ENCODE measurements at regions of chr6 and their contacts with region 1.

Region 1: DNA sequence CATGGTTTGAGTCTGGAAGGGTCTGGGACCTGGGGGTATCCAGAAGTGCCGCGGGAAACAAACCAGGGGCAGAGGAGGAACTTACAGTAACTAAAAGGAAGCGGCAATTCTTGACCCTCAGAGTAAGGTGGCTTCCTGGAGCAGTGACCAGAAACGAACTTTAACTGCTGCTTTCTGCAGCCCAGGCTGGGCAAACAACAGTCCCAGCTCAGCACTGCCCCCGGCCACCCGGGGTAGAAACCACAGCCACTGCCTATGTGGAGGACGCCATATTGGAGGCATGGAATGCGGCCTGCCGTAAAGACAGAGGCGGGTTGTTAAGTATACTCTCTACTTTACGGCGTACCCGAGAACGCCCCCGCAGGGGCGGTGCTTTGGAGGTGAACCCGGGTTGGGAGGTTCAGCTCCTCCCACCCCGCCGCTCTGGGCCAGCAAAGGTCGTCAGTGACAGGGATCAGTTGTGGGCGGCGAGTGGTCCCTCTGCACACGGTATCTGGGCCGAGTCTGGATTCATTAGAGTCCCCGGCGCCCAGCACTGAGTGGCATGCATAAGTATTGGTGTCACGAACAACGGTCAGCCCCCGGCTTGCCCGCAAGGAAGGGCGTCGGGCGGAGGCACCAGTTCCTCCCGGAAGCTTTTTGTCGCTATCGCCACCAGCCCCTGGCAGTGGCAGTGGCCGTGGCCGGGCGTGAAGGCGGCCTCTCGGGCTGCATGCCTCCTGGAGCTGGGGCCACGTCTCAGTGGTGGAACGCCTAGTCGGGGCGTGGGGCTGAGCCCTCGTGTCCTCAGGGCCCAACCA is at the start of gene PDSS2:
- DNase-seq: peak; percentile 100
- ATAC-seq: peak; percentile 96
- H3K4me3 Mint-ChIP-seq: peak within 1 kb of the TSS; percentile 82
- H3K27ac Mint-ChIP-seq: peak within 1 kb of the TSS; percentile 93
- H3K4me1 Mint-ChIP-seq: peaks cover 19% of the 10 kb centered on the region
- H3K27me3 Mint-ChIP-seq: no peaks in the 10 kb centered on the region
- total RNA-seq, gene PDSS2: 11.4 to 11.7 TPM

Region 2: GRCh38 chr6:106325336-106326178 is 1133.9 kb before region 1 on chr6 and contains the start of gene ATG5:
- CTCF ChIA-PET with region 1: no interaction called
- POLR2A ChIA-PET with region 1: no interaction called
- intact Hi-C with region 1: loop called in 1 of 2 experiments (anchors 2 kb)
- DNase-seq: peak; percentile 100
- ATAC-seq: peak; percentile 96
- H3K4me3 Mint-ChIP-seq: peak within 1 kb of the TSS; percentile 99
- H3K27ac Mint-ChIP-seq: peak within 1 kb of the TSS; percentile 98
- H3K4me1 Mint-ChIP-seq: peaks cover 39% of the 10 kb centered on the region
- H3K27me3 Mint-ChIP-seq: peaks cover 8% of the 10 kb centered on the region
- total RNA-seq, gene ATG5: 27.2 to 31.6 TPM

Region 3: GRCh38 chr6:107026965-107027364 is 432.5 kb before region 1 on chr6:
- CTCF ChIA-PET with region 1: no interaction called
- POLR2A ChIA-PET with region 1: no interaction called
- intact Hi-C with region 1: loop called (anchors 1 to 5 kb)
- DNase-seq: no peak
- ATAC-seq: no peak
- H3K4me3 Mint-ChIP-seq: peak overlapping the region; percentile 85
- H3K27ac Mint-ChIP-seq: no peak overlapping the region
- H3K4me1 Mint-ChIP-seq: peaks cover 24% of the 10 kb centered on the region
- H3K27me3 Mint-ChIP-seq: no peaks in the 10 kb centered on the region

Region 4: DNA sequence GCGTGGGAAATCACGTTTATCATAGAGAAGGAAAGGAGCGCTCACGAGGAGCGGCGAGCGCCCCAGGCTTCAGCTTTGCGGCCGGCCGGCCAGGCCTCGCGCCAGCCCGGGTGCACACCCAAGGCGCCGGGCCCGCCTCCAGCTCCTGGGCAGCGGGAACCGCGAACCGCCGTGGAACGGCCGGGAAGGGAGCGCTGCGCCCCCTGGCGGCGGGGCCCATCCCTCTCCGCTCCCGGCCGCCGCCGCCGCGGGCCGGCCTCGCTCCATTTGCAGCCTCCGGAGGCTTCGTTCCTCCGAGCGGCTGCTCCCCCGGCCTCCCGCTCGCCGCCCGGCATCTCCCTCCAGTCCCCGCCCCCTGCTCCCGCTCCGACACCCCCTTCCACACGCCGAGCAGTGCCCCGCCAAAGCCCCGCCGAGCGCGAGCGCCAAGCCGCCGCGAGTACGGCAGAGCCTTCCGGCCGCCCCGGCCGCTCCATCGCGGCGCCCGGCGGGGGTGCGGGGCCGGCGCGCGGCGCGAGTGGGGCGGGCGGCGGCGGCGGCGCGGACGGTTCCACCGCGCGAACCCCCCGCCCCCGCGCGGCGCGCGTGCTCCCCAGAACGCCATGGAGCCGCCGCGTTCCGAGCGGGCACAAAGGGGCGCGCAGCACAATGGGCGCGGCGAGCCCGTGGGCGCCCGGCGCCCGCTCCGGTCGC is 345.1 kb before region 1 on chr6:
- CTCF ChIA-PET with region 1: no interaction called
- POLR2A ChIA-PET with region 1: no interaction called
- intact Hi-C with region 1: loop called in 1 of 2 experiments (anchors 1 kb)
- DNase-seq: peak; percentile 84
- ATAC-seq: peak; percentile 62
- H3K4me3 Mint-ChIP-seq: peak overlapping the region; percentile 67
- H3K27ac Mint-ChIP-seq: peak overlapping the region; percentile 65
- H3K4me1 Mint-ChIP-seq: peaks cover 21% of the 10 kb centered on the region
- H3K27me3 Mint-ChIP-seq: peaks cover 5% of the 10 kb centered on the region

Region 5: GRCh38 chr6:107330168-107330567 is 129.3 kb before region 1 on chr6:
- CTCF ChIA-PET with region 1: no interaction called
- POLR2A ChIA-PET with region 1: no interaction called
- intact Hi-C with region 1: loop called in 1 of 2 experiments (anchors 2 kb)
- DNase-seq: peak; percentile 54
- ATAC-seq: peak; percentile 96
- H3K4me3 Mint-ChIP-seq: no peak overlapping the region
- H3K27ac Mint-ChIP-seq: peak overlapping the region; percentile 69
- H3K4me1 Mint-ChIP-seq: peaks cover 17% of the 10 kb centered on the region
- H3K27me3 Mint-ChIP-seq: no peaks in the 10 kb centered on the region

Region 6: GRCh38 chr6:107576852-107577251 is 117.4 kb after region 1 on chr6:
- CTCF ChIA-PET with region 1: no interaction called
- POLR2A ChIA-PET with region 1: no interaction called
- intact Hi-C with region 1: no loop called
- DNase-seq: peak; percentile 15
- ATAC-seq: peak; percentile 70
- H3K4me3 Mint-ChIP-seq: no peak overlapping the region
- H3K27ac Mint-ChIP-seq: no peak overlapping the region
- H3K4me1 Mint-ChIP-seq: no peaks in the 10 kb centered on the region
- H3K27me3 Mint-ChIP-seq: peaks cover 14% of the 10 kb centered on the region

Region 7: GRCh38 chr6:108074359-108075144 is 615.1 kb after region 1 on chr6 and contains the start of gene OSTM1:
- CTCF ChIA-PET with region 1: no interaction called
- POLR2A ChIA-PET with region 1: no interaction called
- intact Hi-C with region 1: loop called in 1 of 2 experiments (anchors 1 kb)
- DNase-seq: peak; percentile 96
- ATAC-seq: peak; percentile 98
- H3K4me3 Mint-ChIP-seq: peak within 1 kb of the TSS; percentile 76
- H3K27ac Mint-ChIP-seq: peak within 1 kb of the TSS; percentile 80
- H3K4me1 Mint-ChIP-seq: peaks cover 19% of the 10 kb centered on the region
- H3K27me3 Mint-ChIP-seq: peaks cover 3% of the 10 kb centered on the region
- total RNA-seq, gene OSTM1: 5.5 to 7.3 TPM

Measured in activated CD4-positive, alpha-beta T cell treated with anti-CD3 and anti-CD28 coated beads for 36 hours (primary cell).